ENCODE measurements at regions of chr15 and their contacts with region 1.

Region 1: GRCh38 chr15:87619161-87619960 is 637.2 kb downstream of the NTRK3 start:
- DNase-seq: peak; percentile 73
- H3K4me3 ChIP-seq: no peak overlapping the region
- H3K27ac ChIP-seq: peak overlapping the region; percentile 63
- H3K4me1 ChIP-seq: peaks cover 11% of the 10 kb centered on the region
- H3K27me3 ChIP-seq: no peaks in the 10 kb centered on the region
- CTCF ChIP-seq: no peak
- POLR2A ChIP-seq: no peak

Region 2: DNA sequence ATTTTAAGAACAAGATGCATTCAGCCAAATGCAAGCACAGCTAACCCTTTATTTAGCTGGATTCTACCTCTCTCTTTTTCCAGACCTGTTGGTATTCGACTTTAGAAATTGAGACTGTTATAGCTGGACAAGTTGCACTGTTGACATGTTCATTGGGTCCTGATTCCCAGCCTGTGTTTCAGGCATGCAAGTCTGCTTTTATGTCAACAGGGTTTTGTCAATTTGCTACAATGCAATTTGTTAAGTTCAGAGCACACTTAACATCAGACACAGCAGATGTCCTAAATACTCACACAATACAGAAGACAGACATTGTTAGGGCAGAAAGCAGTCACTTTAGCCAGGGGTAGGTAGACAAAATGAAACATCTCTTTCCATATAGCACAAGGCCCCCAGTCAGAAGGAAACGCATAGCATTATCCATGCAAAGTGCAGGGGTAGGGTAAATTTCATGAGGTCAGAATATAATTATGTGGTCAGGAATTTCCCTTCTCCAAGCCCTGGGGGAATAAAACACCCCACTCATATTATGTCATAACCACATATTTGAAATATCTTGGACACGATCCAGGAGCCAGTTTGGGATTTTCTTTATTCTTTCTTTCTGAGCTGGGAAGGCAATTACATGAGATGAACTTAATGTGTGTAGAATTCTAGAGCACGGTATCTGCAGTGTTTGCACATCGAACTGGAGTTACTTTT is 133.0 kb after region 1 on chr15:
- CTCF ChIA-PET with region 1: interaction called, 3 read pairs
- POLR2A ChIA-PET with region 1: no interaction called
- dilution Hi-C with region 1: no loop called
- intact Hi-C with region 1: loop called (anchors 10 kb)
- DNase-seq: peak; percentile 73
- H3K4me3 ChIP-seq: no peak overlapping the region
- H3K27ac ChIP-seq: no peak overlapping the region
- H3K4me1 ChIP-seq: peaks cover 8% of the 10 kb centered on the region
- H3K27me3 ChIP-seq: no peaks in the 10 kb centered on the region
- CTCF ChIP-seq: no peak
- POLR2A ChIP-seq: no peak